Common myeloid progenitor, CD34-positive (primary cell): ENCODE measurements at regions of chr11 and their contacts with region 1.

Region 1: DNA sequence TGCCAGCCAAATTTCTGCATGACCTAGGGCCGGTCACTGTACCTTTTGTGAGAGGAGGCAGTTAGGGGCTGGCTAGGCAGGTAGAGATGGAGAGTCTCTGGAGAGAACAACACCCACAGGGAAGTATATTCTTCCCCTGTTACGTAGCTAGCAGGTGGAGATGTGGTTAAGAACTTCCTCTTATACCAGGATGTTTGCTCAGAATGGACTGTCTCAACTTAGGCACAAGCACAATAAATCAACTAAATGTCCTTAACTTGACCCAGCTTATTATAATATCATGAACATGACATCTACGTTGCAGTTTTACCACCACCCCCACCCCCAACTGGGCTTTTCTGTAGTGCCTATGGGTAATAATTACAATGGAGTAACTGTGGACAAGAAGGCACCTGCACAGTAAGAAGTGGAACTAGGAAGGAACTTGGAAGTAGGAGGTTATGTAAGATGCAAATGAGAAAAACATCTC is 60.7 kb upstream of the MPEG1 start:
- DNase-seq: peak; percentile 82 to 97 (median 94)
- H3K4me3 ChIP-seq: no peak overlapping the region
- H3K27ac ChIP-seq: peak overlapping the region; percentile 64 to 77
- H3K4me1 ChIP-seq: peaks cover 23 to 47% (median 30%) of the 10 kb centered on the region in 4 experiments
- H3K27me3 ChIP-seq: no peaks in the 10 kb centered on the region

Region 2: GRCh38 chr11:59247531-59248227 is 25.7 kb before region 1 on chr11:
- CTCF ChIA-PET with region 1: no interaction called
- POLR2A ChIA-PET with region 1: no interaction called
- DNase-seq: peak in 2 of 3 donors; percentile 68 to 70
- H3K4me3 ChIP-seq: no peak overlapping the region
- H3K27ac ChIP-seq: no peak overlapping the region
- H3K4me1 ChIP-seq: peaks cover 0 to 6% (median 3%) of the 10 kb centered on the region in 4 experiments
- H3K27me3 ChIP-seq: no peaks in the 10 kb centered on the region

Region 3: DNA sequence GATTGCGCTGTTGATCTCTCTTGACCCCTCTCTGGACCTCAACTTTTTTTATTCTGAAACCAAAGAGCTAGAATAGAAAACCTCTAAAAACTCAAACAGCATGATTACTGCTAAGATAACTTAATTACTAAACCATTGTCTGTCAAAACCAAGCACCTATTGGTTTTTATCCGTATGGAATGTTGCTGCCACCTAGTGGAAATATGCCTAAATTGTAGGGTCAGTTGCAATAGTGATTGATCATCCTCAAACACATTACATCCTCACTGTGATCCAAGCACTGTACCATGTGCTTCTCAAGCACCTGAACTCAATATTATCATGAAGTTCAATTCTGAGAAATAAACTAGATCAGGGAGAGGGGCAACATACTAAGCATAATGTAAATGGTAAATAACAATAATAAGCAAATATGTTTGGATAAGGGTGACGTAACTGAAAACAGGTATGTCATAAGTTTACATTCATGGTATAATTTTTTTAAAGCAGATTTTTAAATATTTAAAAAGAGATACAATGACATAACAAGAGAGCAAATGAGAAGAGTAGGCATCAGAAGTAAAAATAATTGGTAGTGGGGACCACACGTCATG is 156.6 kb after region 1 on chr11:
- CTCF ChIA-PET with region 1: interaction called, 115 read pairs
- POLR2A ChIA-PET with region 1: no interaction called
- DNase-seq: peak; percentile 72 to 85 (median 79)
- H3K4me3 ChIP-seq: no peak overlapping the region
- H3K27ac ChIP-seq: no peak overlapping the region
- H3K4me1 ChIP-seq: no peaks in the 10 kb centered on the region
- H3K27me3 ChIP-seq: no peaks in the 10 kb centered on the region